Caco-2 (cell line): ENCODE measurements at regions of chr15 and their contacts with region 1.

Region 1: DNA sequence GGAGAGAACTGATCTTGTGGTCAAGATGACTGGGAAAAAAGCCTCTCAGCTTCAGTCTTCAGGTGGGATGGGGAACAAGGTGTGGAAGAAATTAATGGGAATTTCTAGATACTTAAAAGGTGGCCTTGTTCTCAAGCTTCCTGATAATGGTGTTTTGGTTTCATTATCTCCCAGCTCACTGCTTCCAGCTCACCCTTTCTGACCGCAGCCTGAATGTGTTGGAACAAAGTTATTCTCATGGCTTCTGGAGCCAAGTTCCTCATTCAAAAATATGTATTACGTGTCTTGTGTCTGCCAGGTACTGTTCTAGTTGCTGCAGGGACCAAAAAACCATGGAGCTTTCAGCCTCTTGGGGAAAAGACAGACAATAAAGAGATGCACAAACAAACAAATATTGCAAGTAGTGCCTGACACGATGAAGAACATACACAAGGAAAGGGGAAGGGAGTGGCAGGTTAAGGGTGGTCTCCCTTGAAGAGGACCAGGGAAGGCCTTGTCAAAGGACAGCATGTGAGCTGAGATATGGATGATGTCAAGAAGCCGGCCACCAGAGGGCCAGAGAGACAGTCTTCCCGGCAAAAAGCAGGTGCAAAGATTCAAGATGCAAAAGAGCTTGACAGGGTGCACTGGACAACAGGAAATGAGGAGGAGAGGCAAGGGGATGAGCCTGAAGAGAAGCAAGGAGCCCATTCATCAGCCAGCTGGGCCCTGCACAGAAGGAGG is 35.5 kb downstream of the ARRDC4 start:
- DNase-seq: peak; percentile 12 to 43
- H3K4me3 ChIP-seq: no peak overlapping the region
- H3K4me3 Mint-ChIP-seq: no peak overlapping the region
- H3K27ac Mint-ChIP-seq: no peak overlapping the region
- H3K4me1 ChIP-seq: 0 out of 2 replicates have a peak, but pooled peaks cover 7% of the 10 kb centered on the region
- H3K4me1 Mint-ChIP-seq: no peaks in the 10 kb centered on the region
- H3K27me3 ChIP-seq: no peaks in the 10 kb centered on the region
- H3K27me3 Mint-ChIP-seq: no peaks in the 10 kb centered on the region
- CTCF ChIP-seq: peak; percentile 38 to 46

Region 2: DNA sequence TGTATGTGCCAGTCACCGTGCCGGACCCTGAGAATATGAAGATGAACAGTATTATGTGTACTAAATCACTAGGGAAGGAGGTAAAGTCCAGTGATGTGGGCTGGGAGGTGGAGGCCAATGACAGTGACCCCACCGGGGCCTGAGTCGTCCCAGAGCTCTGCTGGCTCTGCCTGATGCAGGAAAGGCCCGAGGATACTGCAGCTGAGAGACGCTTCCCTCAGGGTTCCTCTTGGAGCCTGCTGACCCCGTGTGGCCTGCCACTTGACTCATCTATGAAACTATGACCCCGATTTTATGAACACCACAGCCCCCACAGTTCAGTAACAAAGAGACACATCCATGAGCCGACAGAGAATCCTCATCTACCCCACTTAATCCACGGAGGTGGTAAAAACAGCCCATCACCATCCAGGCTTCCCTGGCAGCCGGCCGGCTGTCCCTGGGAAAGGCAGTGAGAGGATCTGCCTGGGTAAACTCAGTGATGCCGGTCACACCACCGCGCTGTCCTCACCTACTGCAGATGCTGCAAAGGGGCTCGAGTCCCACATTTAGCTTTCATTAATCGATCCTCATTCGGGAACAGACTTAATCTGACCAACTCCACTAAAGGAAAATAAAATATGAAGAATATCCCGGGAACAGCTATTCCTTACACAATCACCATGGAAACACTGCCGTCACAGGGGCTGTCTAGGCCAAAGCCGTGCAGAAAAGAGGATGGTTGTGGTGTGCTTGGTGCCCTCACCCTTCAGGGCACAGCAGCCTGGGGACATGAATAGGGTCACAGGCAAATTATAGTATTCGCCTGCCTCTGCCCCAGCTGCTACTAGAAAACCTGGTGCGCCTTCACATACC is 47.3 kb after region 1 on chr15:
- CTCF ChIA-PET with region 1: no interaction called
- POLR2A ChIA-PET with region 1: no interaction called
- intact Hi-C with region 1: loop called (anchors 5 kb)
- DNase-seq: peak in 1 of 2 experiments; percentile 2
- H3K4me3 ChIP-seq: no peak overlapping the region
- H3K4me3 Mint-ChIP-seq: no peak overlapping the region
- H3K27ac Mint-ChIP-seq: no peak overlapping the region
- H3K4me1 ChIP-seq: no peaks in the 10 kb centered on the region
- H3K4me1 Mint-ChIP-seq: no peaks in the 10 kb centered on the region
- H3K27me3 ChIP-seq: no peaks in the 10 kb centered on the region
- H3K27me3 Mint-ChIP-seq: peaks cover 5% of the 10 kb centered on the region
- CTCF ChIP-seq: peak in 1 of 2 experiments; percentile 19